Activated CD4-positive, alpha-beta T cell treated with anti-CD3 and anti-CD28 coated beads, Interleukin-2, amount 10 ng/mL, durations not matched to agents 7 days and 5 days (primary cell): ENCODE measurements at regions of chr20 and their contacts with region 1.

Region 1: DNA sequence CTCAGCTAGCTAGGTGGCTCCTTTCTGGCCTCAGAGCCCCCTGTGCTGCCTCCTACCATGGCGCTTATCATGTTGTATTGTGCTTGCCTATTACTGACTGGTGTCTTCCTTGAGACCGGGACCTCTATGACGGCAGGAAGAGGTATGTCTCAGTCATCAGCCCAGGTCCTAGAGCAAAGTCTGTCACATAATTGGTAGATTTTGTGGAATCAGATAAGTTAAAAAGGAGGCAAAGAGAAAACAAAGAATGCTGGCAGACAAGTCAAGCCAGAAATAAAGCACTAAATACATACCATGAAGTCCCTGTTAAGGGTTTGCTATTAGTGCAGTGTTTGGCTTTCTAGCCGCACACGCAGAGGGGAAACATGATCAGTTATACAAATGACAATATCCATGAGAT is 6.0 kb downstream of the TOMM34 start:
- DNase-seq: no peak
- H3K4me3 Mint-ChIP-seq: no peak overlapping the region
- H3K27ac Mint-ChIP-seq: no peak overlapping the region
- H3K4me1 Mint-ChIP-seq: peaks cover 47% of the 10 kb centered on the region
- H3K27me3 Mint-ChIP-seq: no peaks in the 10 kb centered on the region

Region 2: DNA sequence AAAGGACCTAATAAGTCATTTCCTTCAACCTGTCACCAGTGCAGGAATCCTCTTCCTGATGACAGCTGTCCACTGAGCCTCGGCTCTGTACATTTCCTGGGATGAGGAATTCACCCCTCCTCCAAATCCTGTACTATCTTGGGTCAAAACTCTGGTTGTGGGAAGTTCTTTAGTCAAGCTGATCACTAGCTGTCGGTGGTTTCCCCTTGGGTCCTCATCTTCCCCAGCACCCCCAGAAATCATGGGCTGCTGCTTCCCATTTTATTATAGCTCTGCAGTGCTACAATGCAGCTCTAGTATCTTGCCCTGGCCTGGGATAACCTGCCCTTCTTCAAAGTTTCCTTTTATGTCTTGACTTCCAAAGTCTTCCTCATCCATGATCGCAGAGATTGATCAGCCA is 288.1 kb before region 1 on chr20:
- CTCF ChIA-PET with region 1: no interaction called
- POLR2A ChIA-PET with region 1: no interaction called
- DNase-seq: no peak
- H3K4me3 Mint-ChIP-seq: no peak overlapping the region
- H3K27ac Mint-ChIP-seq: no peak overlapping the region
- H3K4me1 Mint-ChIP-seq: peaks cover 15% of the 10 kb centered on the region
- H3K27me3 Mint-ChIP-seq: no peaks in the 10 kb centered on the region

Region 3: GRCh38 chr20:44942264-44942973 is 11.7 kb before region 1 on chr20:
- CTCF ChIA-PET with region 1: interaction called, 20 read pairs
- POLR2A ChIA-PET with region 1: no interaction called
- DNase-seq: no peak
- H3K4me3 Mint-ChIP-seq: no peak overlapping the region
- H3K27ac Mint-ChIP-seq: peak overlapping the region; percentile 61
- H3K4me1 Mint-ChIP-seq: no peaks in the 10 kb centered on the region
- H3K27me3 Mint-ChIP-seq: no peaks in the 10 kb centered on the region

Region 4: GRCh38 chr20:44973053-44973452 is 18.9 kb after region 1 on chr20:
- CTCF ChIA-PET with region 1: no interaction called
- POLR2A ChIA-PET with region 1: no interaction called
- DNase-seq: no peak
- H3K4me3 Mint-ChIP-seq: peak overlapping the region; percentile 23
- H3K27ac Mint-ChIP-seq: no peak overlapping the region
- H3K4me1 Mint-ChIP-seq: peaks cover 76% of the 10 kb centered on the region
- H3K27me3 Mint-ChIP-seq: no peaks in the 10 kb centered on the region